Ovary (tissue), 10 donors: ENCODE measurements at regions of chr17 and their contacts with region 1.

Region 1: GRCh38 chr17:57671667-57672632 is 73.1 kb downstream of the CCDC182 start:
- DNase-seq: peak; percentile 71 to 81 (median 77)
- H3K4me3 ChIP-seq: no peak overlapping the region
- H3K27ac ChIP-seq: no peak overlapping the region
- H3K4me1 ChIP-seq: no peaks in the 10 kb centered on the region
- H3K27me3 ChIP-seq: no peaks in the 10 kb centered on the region
- CTCF ChIP-seq: peak; percentile 82 to 86 (median 83)
- EP300 ChIP-seq: no peak
- POLR2A ChIP-seq: no peak

Region 2: DNA sequence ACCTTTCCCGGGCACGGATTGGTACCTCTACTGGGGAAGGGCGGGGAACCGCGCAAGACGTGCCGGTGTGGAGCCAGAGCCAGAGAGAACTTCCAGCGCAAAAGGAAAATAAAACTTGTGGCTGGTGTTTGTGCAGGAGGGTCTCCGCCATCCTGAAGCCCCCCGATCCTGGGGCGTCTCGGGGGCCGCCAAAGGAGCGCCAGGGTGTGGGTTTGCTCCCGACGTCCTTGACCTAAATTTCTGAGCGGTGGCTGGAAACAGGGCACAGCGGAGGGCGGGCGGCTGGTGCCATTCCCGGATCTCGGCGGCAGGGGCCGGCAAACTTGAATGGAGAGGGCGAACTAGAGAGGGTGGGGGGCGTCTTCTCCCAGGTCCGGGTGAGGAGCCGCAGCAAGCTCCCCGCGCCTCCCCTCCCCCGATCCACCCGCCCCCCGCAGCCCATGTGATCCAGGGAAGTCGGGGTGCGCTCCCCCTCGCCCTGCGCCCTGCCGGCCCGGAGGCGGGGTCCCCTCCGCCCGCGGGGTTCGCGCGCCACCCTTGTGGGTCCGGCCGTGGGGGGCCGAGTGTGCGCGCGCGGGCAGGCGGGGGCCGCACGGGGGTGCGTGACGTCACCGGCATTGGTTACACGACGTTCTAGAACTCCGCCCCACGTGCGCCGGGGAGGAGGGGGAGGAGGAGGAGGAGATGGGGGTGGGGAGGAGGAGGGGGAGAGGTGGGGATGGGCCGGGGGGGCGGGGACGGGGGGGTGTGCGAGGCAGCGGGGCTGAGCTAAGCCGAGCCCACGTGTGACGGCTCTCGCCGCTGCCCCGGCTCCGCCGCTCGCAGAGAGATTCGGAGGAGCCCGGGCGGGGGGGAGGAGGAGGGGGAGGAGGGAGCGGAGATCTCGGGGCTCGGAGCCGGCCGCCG is 415.9 kb before region 1 on chr17 and contains the start of gene MSI2:
- intact Hi-C with region 1: loop called in 1 of 4 experiments (anchors 10 kb)
- DNase-seq: peak; percentile 98 to 99 (median 99)
- H3K4me3 ChIP-seq: peak within 1 kb of the TSS; percentile 95
- H3K27ac ChIP-seq: peak within 1 kb of the TSS; percentile 99 to 100
- H3K4me1 ChIP-seq: peaks cover 11% of the 10 kb centered on the region
- H3K27me3 ChIP-seq: no peaks in the 10 kb centered on the region
- CTCF ChIP-seq: no peak
- EP300 ChIP-seq: peak; percentile 68
- POLR2A ChIP-seq: peak; percentile 84
- total RNA-seq, gene MSI2: 110 to 199 (median 149) TPM

Region 3: DNA sequence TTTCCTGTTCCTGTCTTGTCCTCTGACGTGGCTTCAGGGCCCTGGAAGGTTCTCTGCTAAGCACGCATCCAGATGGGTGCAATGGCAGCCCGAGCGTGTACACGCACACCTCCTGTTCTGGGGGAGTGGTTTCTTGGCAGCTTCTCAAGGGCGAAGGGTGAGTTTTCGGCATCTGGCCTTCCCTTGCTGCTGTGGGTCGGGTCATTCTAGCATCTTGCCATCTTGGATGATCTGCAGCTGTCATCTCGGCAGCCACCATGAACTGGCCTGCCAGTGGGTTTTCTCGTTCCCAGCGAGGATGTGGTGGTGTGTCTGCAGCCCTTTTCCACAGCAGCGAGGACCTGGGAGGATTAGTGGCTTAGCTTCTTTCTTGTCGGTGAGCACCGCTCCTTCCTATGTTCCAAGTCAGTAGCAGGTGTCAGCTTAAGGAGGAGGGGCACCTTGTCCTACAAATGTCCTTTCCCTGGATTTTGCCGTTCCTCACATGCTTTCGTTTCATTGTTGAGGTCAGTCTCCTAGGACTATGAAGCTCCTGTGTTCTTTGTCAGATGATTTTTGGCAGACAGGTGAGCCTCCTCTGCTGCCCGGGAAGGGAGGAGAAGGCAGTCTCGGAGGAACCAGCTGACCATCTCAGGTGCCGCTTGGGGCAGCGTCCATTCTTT is 404.9 kb before region 1 on chr17:
- intact Hi-C with region 1: no loop called
- DNase-seq: no peak
- H3K4me3 ChIP-seq: no peak overlapping the region
- H3K27ac ChIP-seq: no peak overlapping the region
- H3K4me1 ChIP-seq: peaks cover 19% of the 10 kb centered on the region
- H3K27me3 ChIP-seq: no peaks in the 10 kb centered on the region
- CTCF ChIP-seq: no peak
- EP300 ChIP-seq: no peak
- POLR2A ChIP-seq: no peak

Region 4: GRCh38 chr17:57440522-57441485 is 231.1 kb before region 1 on chr17:
- intact Hi-C with region 1: loop called in 1 of 4 experiments (anchors 10 kb)
- DNase-seq: peak; percentile 80 to 89 (median 85)
- H3K4me3 ChIP-seq: no peak overlapping the region
- H3K27ac ChIP-seq: peak overlapping the region; percentile 66 to 68
- H3K4me1 ChIP-seq: peaks cover 47% of the 10 kb centered on the region
- H3K27me3 ChIP-seq: no peaks in the 10 kb centered on the region
- CTCF ChIP-seq: peak; percentile 22 to 86 (median 71)
- EP300 ChIP-seq: no peak
- POLR2A ChIP-seq: peak; percentile 22

Region 5: GRCh38 chr17:57597531-57598453 is 74.2 kb before region 1 on chr17:
- intact Hi-C with region 1: loop called in 1 of 4 experiments (anchors 5 kb)
- DNase-seq: peak; percentile 70 to 80 (median 76)
- H3K4me3 ChIP-seq: no peak overlapping the region
- H3K27ac ChIP-seq: no peak overlapping the region
- H3K4me1 ChIP-seq: peaks cover 8% of the 10 kb centered on the region
- H3K27me3 ChIP-seq: no peaks in the 10 kb centered on the region
- CTCF ChIP-seq: peak; percentile 59 to 73 (median 62)
- EP300 ChIP-seq: no peak
- POLR2A ChIP-seq: no peak

Region 6: DNA sequence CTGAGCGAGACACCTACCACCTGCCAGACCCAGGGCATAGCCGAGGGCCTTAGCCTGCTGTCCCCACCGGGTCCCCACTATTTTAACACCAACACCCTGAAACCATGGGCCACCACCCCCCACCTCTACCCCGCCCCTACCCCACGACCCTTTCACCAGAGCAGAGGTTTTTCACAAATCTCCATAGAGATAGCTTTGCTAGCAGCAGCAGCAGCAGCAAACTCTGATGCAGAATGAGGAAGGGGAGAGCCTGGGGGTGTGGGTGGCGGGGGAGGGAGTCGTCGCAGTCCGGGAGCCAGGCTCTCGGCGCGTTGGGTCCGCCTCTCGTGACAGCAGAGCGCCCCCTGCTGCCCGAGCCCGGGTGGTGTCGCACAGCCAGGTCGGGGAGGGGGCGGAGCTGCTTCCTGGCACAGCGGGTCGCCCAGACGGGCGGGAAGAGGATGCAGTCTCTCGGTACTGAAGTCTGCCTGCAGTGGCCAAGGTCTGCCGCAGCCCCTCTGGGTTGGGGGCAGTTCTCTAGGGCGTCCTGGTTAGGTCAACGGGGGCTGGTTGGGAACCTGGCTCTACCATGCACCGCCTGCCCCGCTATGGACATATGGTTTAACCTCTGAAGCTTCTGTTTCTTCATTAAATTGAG is 111.3 kb after region 1 on chr17:
- intact Hi-C with region 1: no loop called
- DNase-seq: peak; percentile 61 to 81 (median 74)
- H3K4me3 ChIP-seq: no peak overlapping the region
- H3K27ac ChIP-seq: no peak overlapping the region
- H3K4me1 ChIP-seq: peaks cover 6% of the 10 kb centered on the region
- H3K27me3 ChIP-seq: no peaks in the 10 kb centered on the region
- CTCF ChIP-seq: peak; percentile 43 to 70 (median 55)
- EP300 ChIP-seq: no peak
- POLR2A ChIP-seq: no peak